Tibial artery (tissue), 4 donors: ENCODE measurements at regions of chr6 and their contacts with region 1.

Region 1: GRCh38 chr6:34161857-34162515 is 16.1 kb upstream of the GRM4 start:
- DNase-seq: peak in 1 of 2 donors; percentile 39
- H3K4me3 ChIP-seq: no peak overlapping the region
- H3K27ac ChIP-seq: no peak overlapping the region
- H3K4me1 ChIP-seq: no peaks in the 10 kb centered on the region
- H3K27me3 ChIP-seq: peaks cover 0 to 2% of the 10 kb centered on the region in 2 donors
- CTCF ChIP-seq: no peak

Region 2: DNA sequence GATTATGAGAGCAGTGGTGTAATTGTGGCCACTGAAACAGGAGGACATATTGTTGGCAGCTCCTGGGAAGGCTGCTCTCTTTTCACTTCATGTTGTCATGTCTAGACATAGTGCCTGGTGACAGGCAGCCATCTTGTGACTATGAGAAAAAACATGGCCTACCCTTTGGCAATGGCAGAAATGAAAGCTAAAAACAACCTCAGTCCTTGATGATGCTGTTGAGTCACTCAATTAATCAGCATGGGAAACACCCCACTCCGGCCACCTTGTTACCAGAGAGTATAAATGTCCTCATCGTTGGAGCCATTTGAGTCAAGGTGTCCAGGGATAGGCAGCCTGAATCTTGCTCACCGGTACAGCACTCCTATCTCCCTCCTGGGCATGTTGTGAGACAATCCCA is 43.5 kb after region 1 on chr6:
- intact Hi-C with region 1: loop called (anchors 2 kb)
- DNase-seq: no peak
- H3K4me3 ChIP-seq: no peak overlapping the region
- H3K27ac ChIP-seq: no peak overlapping the region
- H3K4me1 ChIP-seq: no peaks in the 10 kb centered on the region
- H3K27me3 ChIP-seq: peaks cover 0 to 10% of the 10 kb centered on the region in 2 donors
- CTCF ChIP-seq: no peak